Vagina (tissue), 2 donors: ENCODE measurements at regions of chr16 and their contacts with region 1.

Region 1: GRCh38 chr16:66859397-66860068 is 15.3 kb downstream of the CA7 start:
- DNase-seq: no peak
- H3K4me3 ChIP-seq: no peak overlapping the region
- H3K27ac ChIP-seq: no peak overlapping the region
- H3K4me1 ChIP-seq: no peaks in the 10 kb centered on the region
- H3K27me3 ChIP-seq: no peaks in the 10 kb centered on the region
- CTCF ChIP-seq: no peak
- POLR2A ChIP-seq: no peak

Region 2: DNA sequence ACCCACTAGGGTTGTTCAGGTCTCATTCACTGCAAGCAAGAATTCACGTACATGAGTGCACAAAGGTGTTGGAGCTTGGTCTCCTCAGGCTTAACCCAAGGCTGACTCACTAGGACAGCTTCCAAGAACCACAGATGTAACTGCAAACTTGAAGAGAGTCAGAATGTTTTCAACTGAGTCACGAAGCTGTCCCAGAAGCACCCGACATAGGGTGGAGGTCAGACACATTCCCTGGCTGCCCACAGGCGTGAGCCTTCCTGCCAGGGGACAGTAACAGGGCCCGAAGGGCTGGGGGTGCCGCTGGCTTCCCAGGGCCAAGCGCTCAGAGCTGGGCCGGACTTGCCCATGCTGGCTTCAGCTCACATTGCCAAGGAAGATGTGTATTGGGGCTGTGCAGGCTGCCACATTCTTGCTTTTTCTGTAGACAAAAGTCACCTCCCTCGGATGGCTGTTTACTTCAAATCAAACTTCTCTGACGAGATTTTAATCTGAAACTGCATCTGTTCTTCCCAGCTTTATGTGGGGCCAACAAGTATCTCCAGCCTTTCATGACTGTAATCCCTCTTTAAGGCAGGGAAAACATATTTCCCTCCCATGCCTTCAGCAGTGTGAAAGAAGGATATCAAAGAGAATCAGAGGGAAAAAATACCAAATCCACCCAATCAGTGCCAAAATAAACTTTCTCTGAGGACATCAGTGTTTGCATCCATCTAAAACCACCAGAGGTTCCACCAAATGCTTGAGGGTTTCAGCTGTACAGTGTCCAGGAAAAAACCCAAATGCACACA is 240.8 kb before region 1 on chr16:
- intact Hi-C with region 1: loop called (anchors 10 kb)
- DNase-seq: no peak
- H3K4me3 ChIP-seq: no peak overlapping the region
- H3K27ac ChIP-seq: peak overlapping the region; percentile 0
- H3K4me1 ChIP-seq: peaks cover 29% of the 10 kb centered on the region
- H3K27me3 ChIP-seq: no peaks in the 10 kb centered on the region
- CTCF ChIP-seq: no peak
- POLR2A ChIP-seq: no peak

Region 3: GRCh38 chr16:66728117-66728787 is 131.3 kb before region 1 on chr16:
- intact Hi-C with region 1: loop called (anchors 10 kb)
- DNase-seq: no peak
- H3K4me3 ChIP-seq: no peak overlapping the region
- H3K27ac ChIP-seq: no peak overlapping the region
- H3K4me1 ChIP-seq: peaks cover 11% of the 10 kb centered on the region
- H3K27me3 ChIP-seq: no peaks in the 10 kb centered on the region
- CTCF ChIP-seq: peak; percentile 26 to 62 (median 41)
- POLR2A ChIP-seq: no peak

Region 4: GRCh38 chr16:66872943-66873684 is 13.6 kb after region 1 on chr16:
- intact Hi-C with region 1: no loop called
- DNase-seq: no peak
- H3K4me3 ChIP-seq: peak overlapping the region; percentile 31 to 40
- H3K27ac ChIP-seq: peak overlapping the region; percentile 76
- H3K4me1 ChIP-seq: peaks cover 8% of the 10 kb centered on the region
- H3K27me3 ChIP-seq: no peaks in the 10 kb centered on the region
- CTCF ChIP-seq: peak; percentile 62 to 93 (median 84)
- POLR2A ChIP-seq: no peak

Region 5: DNA sequence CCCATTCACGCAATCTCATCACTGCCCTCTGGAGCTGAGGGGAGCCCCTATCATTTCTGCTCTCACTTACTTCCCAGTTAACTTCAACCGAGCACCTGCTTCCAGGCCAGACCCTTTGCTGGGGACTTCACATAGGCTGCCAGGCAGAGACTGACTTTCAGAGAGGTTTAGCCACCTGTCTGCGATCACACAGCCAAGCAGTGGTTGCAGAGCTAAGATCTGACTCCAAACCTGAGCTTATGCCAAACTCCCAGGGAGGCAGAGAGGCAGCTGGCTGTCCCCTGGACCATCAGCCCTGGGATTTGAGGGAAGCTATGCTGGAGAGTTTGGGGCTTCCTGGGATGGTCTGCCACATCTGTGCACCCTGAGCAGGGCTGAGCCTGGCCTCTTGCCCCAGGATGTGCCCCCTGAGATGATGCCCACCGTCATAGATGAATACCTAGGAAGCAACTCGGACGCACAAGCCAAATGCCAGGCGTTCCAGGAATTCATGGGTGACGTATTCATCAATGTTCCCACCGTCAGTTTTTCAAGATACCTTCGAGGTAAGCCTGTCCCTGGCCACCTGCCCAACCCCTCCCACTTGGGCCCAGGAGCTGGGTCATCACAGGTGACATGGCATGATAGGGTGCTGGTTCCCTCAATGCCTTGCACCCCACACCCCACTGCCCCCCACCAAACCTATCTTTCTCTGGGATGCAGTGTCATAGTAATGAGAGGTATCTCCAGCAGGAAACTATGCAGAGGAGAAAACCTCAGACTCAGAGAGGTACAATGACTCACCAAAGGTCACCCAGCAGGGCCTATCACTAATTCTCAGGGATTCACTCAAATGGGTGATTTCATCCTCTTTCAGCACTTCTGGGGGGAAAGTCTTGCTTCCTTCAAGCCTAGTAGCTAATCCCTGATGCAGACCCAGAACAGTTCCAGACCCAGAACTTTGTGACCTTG is 111.5 kb after region 1 on chr16:
- intact Hi-C with region 1: no loop called
- DNase-seq: no peak
- H3K4me3 ChIP-seq: no peak overlapping the region
- H3K27ac ChIP-seq: no peak overlapping the region
- H3K4me1 ChIP-seq: no peaks in the 10 kb centered on the region
- H3K27me3 ChIP-seq: no peaks in the 10 kb centered on the region
- CTCF ChIP-seq: no peak
- POLR2A ChIP-seq: no peak

Region 6: DNA sequence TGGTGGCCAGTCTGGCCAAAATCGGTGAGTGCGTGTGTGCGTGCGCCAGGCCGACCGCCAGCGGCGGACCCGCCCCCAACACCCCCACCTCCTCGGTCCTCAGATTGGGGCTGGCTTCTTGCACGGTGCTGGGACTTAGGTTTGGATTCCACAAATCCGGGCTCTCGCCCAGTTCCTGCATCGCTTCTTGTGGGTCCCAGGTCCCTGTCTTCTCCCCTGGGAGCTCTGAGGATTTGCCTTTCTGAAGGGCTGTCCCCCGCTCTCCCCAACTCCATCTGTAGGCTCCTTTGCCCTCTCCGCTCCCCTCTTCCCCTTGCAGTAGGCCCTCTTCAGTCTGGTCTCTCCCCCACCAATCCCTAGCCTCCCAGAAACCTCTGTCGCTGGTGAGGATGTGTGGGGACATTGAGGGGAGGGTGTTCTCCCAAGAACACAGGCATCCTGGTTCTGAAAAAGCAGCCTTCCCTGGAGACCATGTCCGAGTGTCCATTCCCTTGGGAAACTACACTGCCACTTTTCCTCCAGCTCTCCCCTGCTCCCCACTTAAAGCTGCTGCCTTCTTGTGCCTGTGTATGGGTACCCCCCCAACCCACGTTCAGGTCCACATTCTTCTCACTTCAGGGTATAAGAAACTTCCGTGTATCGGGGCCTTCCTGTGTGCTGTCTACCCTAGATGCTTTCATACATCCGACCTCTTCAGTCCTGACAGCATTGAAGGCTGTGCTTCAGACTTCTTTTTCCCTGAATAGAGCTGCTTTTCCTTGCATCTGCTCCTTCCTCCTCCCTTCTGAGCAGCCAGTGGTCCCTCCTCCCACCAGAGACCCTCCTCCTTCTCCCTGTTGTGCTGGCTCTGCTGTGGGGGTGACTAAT is 389.9 kb after region 1 on chr16:
- intact Hi-C with region 1: no loop called
- DNase-seq: no peak
- H3K4me3 ChIP-seq: peak overlapping the region; percentile 92 to 93
- H3K27ac ChIP-seq: no peak overlapping the region
- H3K4me1 ChIP-seq: peaks cover 49% of the 10 kb centered on the region
- H3K27me3 ChIP-seq: no peaks in the 10 kb centered on the region
- CTCF ChIP-seq: no peak
- POLR2A ChIP-seq: no peak